Heart left ventricle (tissue), 16 donors: ENCODE measurements at regions of chr20 and their contacts with region 1.

Region 1: DNA sequence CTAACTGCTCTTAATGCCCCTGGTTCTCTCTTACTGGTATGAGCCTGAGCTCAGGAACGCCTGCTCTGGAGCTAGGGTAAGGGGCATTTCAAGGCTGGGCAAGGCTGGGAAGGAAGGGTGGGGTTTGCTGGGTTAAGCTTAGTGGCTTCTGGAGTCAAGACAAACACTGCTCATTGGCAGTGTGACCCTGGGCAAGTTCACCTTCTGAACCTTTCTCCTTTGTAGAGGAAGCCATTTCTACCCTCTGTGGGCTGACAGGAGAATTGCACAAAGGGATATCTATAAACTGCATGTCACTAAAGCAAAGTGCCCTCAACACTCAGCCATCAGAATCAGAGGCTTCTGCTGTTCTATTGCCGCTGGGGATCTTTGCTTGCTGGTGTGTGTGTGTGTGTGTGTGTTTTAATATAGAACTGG is 20.3 kb upstream of the LRRN4 start:
- DNase-seq: peak in 3 of 5 donors; percentile 29 to 55 (median 47)
- ATAC-seq: peak; percentile 69 to 86 (median 82)
- H3K4me3 ChIP-seq: peak overlapping the region in 1 of 12 donors; percentile 5
- H3K27ac ChIP-seq: peak overlapping the region in 11 of 12 donors; percentile 12 to 82 (median 69)
- H3K4me1 ChIP-seq: peaks cover 0 to 23% (median 4%) of the 10 kb centered on the region in 12 donors
- H3K27me3 ChIP-seq: no peaks in the 10 kb centered on the region
- CTCF ChIP-seq: peak in 9 of 12 donors; percentile 9 to 50 (median 34)
- POLR2A ChIP-seq: no peak

Region 2: GRCh38 chr20:5529331-5530148 is 544.6 kb before region 1 on chr20:
- intact Hi-C with region 1: loop called (anchors 1 to 5 kb)
- DNase-seq: peak; percentile 73 to 91 (median 79)
- ATAC-seq: peak; percentile 73 to 92 (median 88)
- H3K4me3 ChIP-seq: peak overlapping the region in 3 of 12 donors; percentile 1 to 25 (median 23)
- H3K27ac ChIP-seq: no peak overlapping the region
- H3K4me1 ChIP-seq: peaks cover 0 to 22% (median 6%) of the 10 kb centered on the region in 12 donors
- H3K27me3 ChIP-seq: no peaks in the 10 kb centered on the region
- CTCF ChIP-seq: peak; percentile 56 to 90 (median 74)
- POLR2A ChIP-seq: no peak

Region 3: GRCh38 chr20:5788385-5788895 is 285.7 kb before region 1 on chr20:
- intact Hi-C with region 1: loop called in 4 of 10 experiments (anchors 10 kb)
- DNase-seq: peak; percentile 69 to 84 (median 80)
- ATAC-seq: peak; percentile 83 to 95 (median 94)
- H3K4me3 ChIP-seq: no peak overlapping the region
- H3K27ac ChIP-seq: no peak overlapping the region
- H3K4me1 ChIP-seq: peaks cover 0 to 21% (median 15%) of the 10 kb centered on the region in 12 donors
- H3K27me3 ChIP-seq: no peaks in the 10 kb centered on the region
- CTCF ChIP-seq: peak; percentile 83 to 97 (median 91)
- POLR2A ChIP-seq: no peak

Region 4: GRCh38 chr20:5797843-5798462 is 276.2 kb before region 1 on chr20:
- intact Hi-C with region 1: loop called in 1 of 10 experiments (anchors 10 kb)
- DNase-seq: no peak
- ATAC-seq: no peak
- H3K4me3 ChIP-seq: no peak overlapping the region
- H3K27ac ChIP-seq: no peak overlapping the region
- H3K4me1 ChIP-seq: no peaks in the 10 kb centered on the region
- H3K27me3 ChIP-seq: no peaks in the 10 kb centered on the region
- CTCF ChIP-seq: no peak
- POLR2A ChIP-seq: no peak

Region 5: GRCh38 chr20:5822569-5822968 is 251.6 kb before region 1 on chr20:
- intact Hi-C with region 1: loop called in 1 of 10 experiments (anchors 10 kb)
- DNase-seq: no peak
- ATAC-seq: no peak
- H3K4me3 ChIP-seq: no peak overlapping the region
- H3K27ac ChIP-seq: no peak overlapping the region
- H3K4me1 ChIP-seq: peaks cover 0 to 40% (median 3%) of the 10 kb centered on the region in 12 donors
- H3K27me3 ChIP-seq: no peaks in the 10 kb centered on the region
- CTCF ChIP-seq: no peak
- POLR2A ChIP-seq: no peak

Region 6: DNA sequence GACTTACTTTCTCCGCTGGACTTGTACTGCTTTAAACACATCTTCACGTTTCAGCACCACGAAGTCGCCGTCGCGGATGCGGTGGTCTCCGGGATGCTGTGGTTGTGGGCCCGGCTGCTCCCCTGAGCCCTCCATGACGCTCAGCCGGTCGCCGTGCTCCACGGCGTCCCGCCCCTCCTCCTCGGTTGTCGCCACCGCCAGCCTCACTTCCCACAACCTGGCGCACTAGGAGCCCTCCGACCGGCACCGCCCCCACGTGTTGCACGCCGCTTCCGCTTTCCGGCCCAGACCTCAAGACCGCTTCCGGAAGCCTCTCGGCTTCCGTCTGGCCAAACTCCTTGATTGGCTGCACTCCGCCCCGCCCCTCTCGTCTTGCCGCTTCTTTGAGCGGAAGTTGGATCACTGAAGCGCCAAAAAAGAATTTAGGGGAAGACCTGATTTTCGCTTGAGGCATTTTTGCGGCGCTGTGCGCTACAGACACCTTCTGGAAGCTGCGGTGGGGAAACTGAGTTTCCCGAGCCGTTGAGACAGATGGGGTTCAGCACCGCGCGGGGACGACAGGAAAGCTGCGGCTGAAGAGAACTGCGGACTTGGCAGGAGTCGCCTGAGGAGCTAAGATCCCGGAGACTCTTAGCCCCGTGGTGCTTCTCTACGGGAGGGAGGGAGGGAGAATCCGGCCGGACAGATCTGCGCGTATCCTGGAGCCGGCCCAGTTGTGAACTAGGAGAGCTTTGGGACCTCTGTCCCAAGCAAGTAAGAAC is 123.7 kb before region 1 on chr20 and contains the starts of genes MCM8 and TRMT6:
- intact Hi-C with region 1: loop called in 3 of 10 experiments (anchors 2 to 10 kb)
- DNase-seq: peak; percentile 95 to 98 (median 97)
- ATAC-seq: peak; percentile 100
- H3K4me3 ChIP-seq: peak within 1 kb of the TSS; percentile 62 to 94 (median 70)
- H3K27ac ChIP-seq: peak within 1 kb of the TSS in 11 of 12 donors; percentile 43 to 81 (median 71)
- H3K4me1 ChIP-seq: peaks cover 4 to 38% (median 16%) of the 10 kb centered on the region in 12 donors
- H3K27me3 ChIP-seq: no peaks in the 10 kb centered on the region
- CTCF ChIP-seq: peak in 1 of 12 donors; percentile 3
- POLR2A ChIP-seq: peak in 1 of 2 donors; percentile 38
- total RNA-seq, gene MCM8: 3.5 to 8.7 (median 6.6) TPM
- total RNA-seq, gene TRMT6: 5.8 to 12.0 (median 9.8) TPM

Region 7: GRCh38 chr20:5996765-5997164 is 77.4 kb before region 1 on chr20:
- intact Hi-C with region 1: loop called in 1 of 10 experiments (anchors 5 kb)
- DNase-seq: no peak
- ATAC-seq: peak in 1 of 4 donors; percentile 34
- H3K4me3 ChIP-seq: no peak overlapping the region
- H3K27ac ChIP-seq: no peak overlapping the region
- H3K4me1 ChIP-seq: no peaks in the 10 kb centered on the region
- H3K27me3 ChIP-seq: no peaks in the 10 kb centered on the region
- CTCF ChIP-seq: no peak
- POLR2A ChIP-seq: no peak

Region 8: DNA sequence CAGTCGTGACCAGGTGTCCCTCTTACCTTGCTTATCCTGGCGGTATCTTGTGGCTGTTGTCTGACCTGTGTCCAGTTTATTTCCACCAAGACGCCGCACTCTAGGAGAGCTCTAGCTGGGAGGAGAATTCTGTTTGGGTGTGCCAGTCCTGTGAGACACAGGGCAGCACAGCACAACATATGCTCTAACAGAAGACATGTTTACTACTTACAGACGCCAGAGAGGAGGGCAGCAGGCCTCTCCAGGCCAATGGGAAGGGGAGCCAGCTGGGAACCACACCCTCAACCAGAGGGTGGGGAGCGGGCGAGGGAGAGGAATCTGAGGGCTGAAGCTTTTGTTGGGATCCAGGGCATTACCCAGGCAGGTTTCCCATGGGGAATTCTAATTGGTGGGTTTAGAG is 73.9 kb after region 1 on chr20:
- intact Hi-C with region 1: no loop called
- DNase-seq: no peak
- ATAC-seq: no peak
- H3K4me3 ChIP-seq: no peak overlapping the region
- H3K27ac ChIP-seq: no peak overlapping the region
- H3K4me1 ChIP-seq: no peaks in the 10 kb centered on the region
- H3K27me3 ChIP-seq: no peaks in the 10 kb centered on the region
- CTCF ChIP-seq: no peak
- POLR2A ChIP-seq: no peak

Region 9: GRCh38 chr20:7237251-7237650 is 1163.1 kb after region 1 on chr20:
- intact Hi-C with region 1: no loop called
- DNase-seq: no peak
- ATAC-seq: no peak
- H3K4me3 ChIP-seq: no peak overlapping the region
- H3K27ac ChIP-seq: no peak overlapping the region
- H3K4me1 ChIP-seq: no peaks in the 10 kb centered on the region
- H3K27me3 ChIP-seq: no peaks in the 10 kb centered on the region
- CTCF ChIP-seq: no peak
- POLR2A ChIP-seq: no peak